ENCODE measurements at regions of chr7 and their contacts with region 1.

Region 1: GRCh38 chr7:37504801-37505200 is 56.1 kb upstream of the ELMO1 start:
- DNase-seq: no peak
- ATAC-seq: peak in 1 of 4 donors; percentile 48
- H3K4me3 ChIP-seq: no peak overlapping the region
- H3K27ac ChIP-seq: peak overlapping the region in 4 of 12 donors; percentile 11 to 51 (median 31)
- H3K4me1 ChIP-seq: peaks cover 0 to 13% (median 0%) of the 10 kb centered on the region in 12 donors
- H3K27me3 ChIP-seq: peaks cover 0 to 4% (median 0%) of the 10 kb centered on the region in 9 donors
- CTCF ChIP-seq: no peak
- POLR2A ChIP-seq: no peak

Region 2: GRCh38 chr7:37208528-37208927 is 296.3 kb before region 1 on chr7:
- intact Hi-C with region 1: loop called in 1 of 10 experiments (anchors 10 kb)
- DNase-seq: peak in 4 of 5 donors; percentile 73 to 76 (median 74)
- ATAC-seq: peak; percentile 85 to 93 (median 90)
- H3K4me3 ChIP-seq: no peak overlapping the region
- H3K27ac ChIP-seq: peak overlapping the region; percentile 6 to 75 (median 56)
- H3K4me1 ChIP-seq: peaks cover 0 to 33% (median 22%) of the 10 kb centered on the region in 12 donors
- H3K27me3 ChIP-seq: no peaks in the 10 kb centered on the region
- CTCF ChIP-seq: peak; percentile 51 to 82 (median 59)
- POLR2A ChIP-seq: no peak

Region 3: GRCh38 chr7:37216156-37216852 is 288.5 kb before region 1 on chr7:
- intact Hi-C with region 1: loop called in 2 of 10 experiments (anchors 5 to 10 kb)
- DNase-seq: peak in 1 of 5 donors; percentile 29
- ATAC-seq: peak in 3 of 4 donors; percentile 69 to 82 (median 77)
- H3K4me3 ChIP-seq: no peak overlapping the region
- H3K27ac ChIP-seq: peak overlapping the region in 5 of 12 donors; percentile 4 to 40 (median 37)
- H3K4me1 ChIP-seq: peaks cover 0 to 55% (median 30%) of the 10 kb centered on the region in 12 donors
- H3K27me3 ChIP-seq: no peaks in the 10 kb centered on the region
- CTCF ChIP-seq: no peak
- POLR2A ChIP-seq: no peak

Region 4: GRCh38 chr7:37558320-37559026 is 53.7 kb after region 1 on chr7:
- intact Hi-C with region 1: no loop called
- DNase-seq: no peak
- ATAC-seq: no peak
- H3K4me3 ChIP-seq: no peak overlapping the region
- H3K27ac ChIP-seq: no peak overlapping the region
- H3K4me1 ChIP-seq: no peaks in the 10 kb centered on the region
- H3K27me3 ChIP-seq: no peaks in the 10 kb centered on the region
- CTCF ChIP-seq: no peak
- POLR2A ChIP-seq: no peak

Region 5: DNA sequence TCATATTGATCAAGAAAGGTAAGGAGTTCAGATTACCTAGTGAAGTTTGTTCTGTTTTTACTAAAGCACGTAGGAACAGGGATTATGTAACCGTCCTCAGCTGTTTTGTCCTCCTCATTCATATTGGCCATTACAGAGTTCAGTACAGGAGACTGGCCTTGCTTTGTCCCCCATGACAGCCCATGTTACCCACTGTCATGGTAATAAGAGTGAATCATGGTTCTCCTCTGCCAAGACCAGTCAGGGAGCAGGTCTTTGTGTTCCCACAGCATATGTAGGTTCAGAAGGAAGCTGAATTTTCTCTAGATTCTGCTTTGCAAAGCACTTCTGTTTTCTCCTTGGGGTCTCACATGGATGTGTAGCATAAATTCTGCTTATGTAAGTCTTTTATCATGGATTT is 72.6 kb after region 1 on chr7:
- intact Hi-C with region 1: no loop called
- DNase-seq: no peak
- ATAC-seq: no peak
- H3K4me3 ChIP-seq: no peak overlapping the region
- H3K27ac ChIP-seq: no peak overlapping the region
- H3K4me1 ChIP-seq: no peaks in the 10 kb centered on the region
- H3K27me3 ChIP-seq: no peaks in the 10 kb centered on the region
- CTCF ChIP-seq: no peak
- POLR2A ChIP-seq: no peak

Region 6: GRCh38 chr7:38052786-38053185 is 548.0 kb after region 1 on chr7:
- intact Hi-C with region 1: no loop called
- DNase-seq: no peak
- ATAC-seq: no peak
- H3K4me3 ChIP-seq: no peak overlapping the region
- H3K27ac ChIP-seq: no peak overlapping the region
- H3K4me1 ChIP-seq: peaks cover 0 to 3% (median 0%) of the 10 kb centered on the region in 12 donors
- H3K27me3 ChIP-seq: no peaks in the 10 kb centered on the region
- CTCF ChIP-seq: no peak
- POLR2A ChIP-seq: no peak